ENCODE measurements at regions of chr2 and their contacts with region 1.

Region 1: GRCh38 chr2:144703852-144704708 is 184.2 kb upstream of the ZEB2 start:
- H3K4me3 Mint-ChIP-seq: no peak overlapping the region
- H3K27ac Mint-ChIP-seq: peak overlapping the region; percentile 95
- H3K4me1 Mint-ChIP-seq: peaks cover 60% of the 10 kb centered on the region
- H3K27me3 Mint-ChIP-seq: no peaks in the 10 kb centered on the region

Region 2: GRCh38 chr2:144747571-144747970 is 43.5 kb after region 1 on chr2:
- intact Hi-C with region 1: loop called (anchors 5 kb)
- H3K4me3 Mint-ChIP-seq: no peak overlapping the region
- H3K27ac Mint-ChIP-seq: no peak overlapping the region
- H3K4me1 Mint-ChIP-seq: peaks cover 12% of the 10 kb centered on the region
- H3K27me3 Mint-ChIP-seq: no peaks in the 10 kb centered on the region

Region 3: DNA sequence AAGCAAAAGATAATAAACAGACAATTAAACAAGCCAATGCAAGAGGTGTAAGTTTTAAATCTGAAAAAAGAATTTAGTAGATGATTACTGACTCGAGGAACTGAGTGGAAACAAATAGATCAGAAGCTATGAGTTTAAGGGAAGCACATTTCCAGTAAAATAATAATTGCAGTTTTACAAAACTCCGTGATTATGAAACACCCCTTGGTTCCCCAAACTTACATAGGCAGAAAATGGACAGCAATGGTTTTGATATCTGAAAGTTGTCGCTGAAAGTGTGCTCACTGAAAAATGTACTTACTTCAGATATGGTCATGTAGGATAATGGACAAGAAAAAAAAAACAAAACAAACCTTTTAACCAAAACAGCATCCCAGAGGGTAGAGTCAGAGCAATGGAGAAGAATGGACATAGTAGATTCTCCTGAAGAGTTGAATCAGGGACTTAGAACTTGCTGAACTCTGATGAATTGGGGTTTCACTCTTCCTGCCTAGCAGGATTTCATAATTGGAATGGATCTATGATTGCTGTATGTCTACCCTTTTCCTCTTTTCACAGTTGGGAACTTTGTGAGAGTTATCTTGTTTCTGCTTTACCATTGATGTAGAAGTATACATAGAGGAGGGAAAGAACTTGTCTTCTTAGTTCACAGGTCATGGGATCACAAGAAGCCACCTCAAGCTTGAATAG is 121.4 kb after region 1 on chr2:
- intact Hi-C with region 1: loop called (anchors 10 kb)
- H3K4me3 Mint-ChIP-seq: peak overlapping the region; percentile 60
- H3K27ac Mint-ChIP-seq: peak overlapping the region; percentile 93
- H3K4me1 Mint-ChIP-seq: peaks cover 53% of the 10 kb centered on the region
- H3K27me3 Mint-ChIP-seq: no peaks in the 10 kb centered on the region

Measured in dendritic cell treated with granulocyte-macrophage colony-stimulating factor and Interleukin-4, amounts not matched to agents 40 ng/mL and 50 ng/mL, for 4 days (primary cell).